Lower lobe of right lung (tissue), 2 donors: ENCODE measurements at regions of chr13 and their contacts with region 1.

Region 1: GRCh38 chr13:99656092-99656745 is 154.9 kb downstream of the TM9SF2 start:
- DNase-seq: peak; percentile 57
- ATAC-seq: peak; percentile 83 to 87
- H3K4me3 ChIP-seq: no peak overlapping the region
- H3K27ac ChIP-seq: no peak overlapping the region
- H3K4me1 ChIP-seq: peaks cover 17% of the 10 kb centered on the region
- H3K27me3 ChIP-seq: no peaks in the 10 kb centered on the region
- CTCF ChIP-seq: peak; percentile 89

Region 2: GRCh38 chr13:100514788-100515409 is 858.7 kb after region 1 on chr13:
- intact Hi-C with region 1: loop called (anchors 10 kb)
- DNase-seq: peak; percentile 83
- ATAC-seq: peak; percentile 94 to 97
- H3K4me3 ChIP-seq: no peak overlapping the region
- H3K27ac ChIP-seq: no peak overlapping the region
- H3K4me1 ChIP-seq: peaks cover 9% of the 10 kb centered on the region
- H3K27me3 ChIP-seq: no peaks in the 10 kb centered on the region
- CTCF ChIP-seq: peak; percentile 93